IMR-90 (cell line): ENCODE measurements at regions of chr5 and their contacts with region 1.

Region 1: DNA sequence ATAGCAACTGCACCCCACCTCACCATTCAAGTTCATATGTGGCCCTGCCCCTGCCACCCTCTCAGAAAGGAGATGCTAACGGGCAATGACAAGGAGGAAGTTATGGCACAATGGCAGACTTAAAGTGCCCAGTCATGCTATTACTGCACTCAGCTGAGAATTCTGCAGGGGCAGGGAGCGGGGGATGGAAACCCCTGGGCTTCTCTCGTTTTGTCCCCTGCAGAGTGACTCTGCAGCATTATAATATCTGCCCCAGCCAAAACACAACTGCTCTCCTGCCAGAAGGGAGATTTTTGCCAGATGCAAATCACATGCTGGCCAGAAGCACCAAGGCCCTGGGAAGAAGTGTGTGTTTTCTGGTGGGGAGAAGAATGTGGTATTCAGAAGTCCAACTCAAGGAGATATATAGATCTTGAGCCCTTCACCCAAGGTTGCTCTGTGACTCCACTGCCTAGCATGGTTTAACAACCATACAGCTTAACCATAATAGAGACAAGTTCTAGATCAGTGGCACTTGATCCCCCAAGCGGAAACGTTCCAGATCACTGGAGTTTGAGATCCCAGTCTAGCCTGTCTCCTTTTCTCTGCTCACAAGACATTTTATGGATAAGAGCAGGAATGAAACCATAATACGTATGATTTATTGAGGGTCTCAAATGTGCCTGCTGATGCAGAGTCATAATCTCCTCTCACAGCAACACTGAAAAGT is 207.0 kb upstream of the MAP3K1 start:
- DNase-seq: peak; percentile 13
- ATAC-seq: no peak; the same call in 1 of the 2 replicates
- H3K4me3 ChIP-seq: no peak overlapping the region
- H3K27ac ChIP-seq: no peak overlapping the region
- H3K4me1 ChIP-seq: peaks cover 9% of the 10 kb centered on the region
- H3K27me3 ChIP-seq: peaks cover 4% of the 10 kb centered on the region; the same call in 1 of the 2 replicates
- CTCF ChIP-seq: no peak
- POLR2A ChIP-seq: no peak
- RAD21 ChIP-seq: no peak

Region 2: DNA sequence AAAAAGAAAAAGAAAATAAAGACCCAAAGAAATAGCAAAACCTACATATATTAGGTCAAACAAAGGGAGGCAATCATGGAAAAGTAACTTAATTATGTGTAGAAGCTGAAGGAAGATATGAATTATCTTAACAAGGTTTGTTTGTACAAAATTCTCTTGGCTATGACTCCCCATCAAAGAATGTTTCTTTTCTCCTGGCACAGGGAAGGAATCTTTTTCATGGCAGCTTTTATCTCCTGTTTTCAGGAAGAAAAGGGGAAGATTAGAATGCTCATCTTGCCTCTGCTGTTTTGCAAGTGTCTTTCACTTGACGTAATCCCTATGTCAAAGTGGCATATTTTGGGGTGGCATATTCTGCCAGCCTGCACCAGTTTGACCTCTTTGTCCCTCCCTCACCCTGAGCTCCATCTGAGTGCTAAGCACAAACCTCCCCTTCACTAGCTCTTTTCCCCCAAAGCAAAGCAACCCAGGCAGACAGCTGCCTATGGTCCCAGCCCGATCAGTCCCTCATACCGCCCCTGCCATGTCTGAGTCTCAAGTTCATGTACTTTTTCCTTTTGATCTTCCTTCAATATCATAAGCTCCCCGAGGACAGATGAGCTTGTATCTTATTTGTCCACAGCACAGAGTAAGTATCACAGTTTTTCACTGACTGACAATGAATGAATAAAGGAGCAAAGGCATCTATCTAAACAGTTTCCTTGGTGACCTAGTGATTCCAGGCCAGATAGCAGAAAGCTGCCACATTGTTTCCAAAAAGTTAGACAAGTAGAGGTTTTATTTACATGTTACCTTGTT is 132.5 kb before region 1 on chr5:
- CTCF ChIA-PET with region 1: no interaction called
- POLR2A ChIA-PET with region 1: no interaction called
- dilution Hi-C with region 1: no loop called
- in situ Hi-C with region 1: no loop called
- intact Hi-C with region 1: no loop called
- DNase-seq: peak; percentile 50
- ATAC-seq: peak; percentile 22
- H3K4me3 ChIP-seq: no peak overlapping the region
- H3K27ac ChIP-seq: peak overlapping the region; percentile 60
- H3K4me1 ChIP-seq: peaks cover 24% of the 10 kb centered on the region
- H3K27me3 ChIP-seq: no peaks in the 10 kb centered on the region
- CTCF ChIP-seq: no peak
- POLR2A ChIP-seq: no peak
- RAD21 ChIP-seq: no peak

Region 3: DNA sequence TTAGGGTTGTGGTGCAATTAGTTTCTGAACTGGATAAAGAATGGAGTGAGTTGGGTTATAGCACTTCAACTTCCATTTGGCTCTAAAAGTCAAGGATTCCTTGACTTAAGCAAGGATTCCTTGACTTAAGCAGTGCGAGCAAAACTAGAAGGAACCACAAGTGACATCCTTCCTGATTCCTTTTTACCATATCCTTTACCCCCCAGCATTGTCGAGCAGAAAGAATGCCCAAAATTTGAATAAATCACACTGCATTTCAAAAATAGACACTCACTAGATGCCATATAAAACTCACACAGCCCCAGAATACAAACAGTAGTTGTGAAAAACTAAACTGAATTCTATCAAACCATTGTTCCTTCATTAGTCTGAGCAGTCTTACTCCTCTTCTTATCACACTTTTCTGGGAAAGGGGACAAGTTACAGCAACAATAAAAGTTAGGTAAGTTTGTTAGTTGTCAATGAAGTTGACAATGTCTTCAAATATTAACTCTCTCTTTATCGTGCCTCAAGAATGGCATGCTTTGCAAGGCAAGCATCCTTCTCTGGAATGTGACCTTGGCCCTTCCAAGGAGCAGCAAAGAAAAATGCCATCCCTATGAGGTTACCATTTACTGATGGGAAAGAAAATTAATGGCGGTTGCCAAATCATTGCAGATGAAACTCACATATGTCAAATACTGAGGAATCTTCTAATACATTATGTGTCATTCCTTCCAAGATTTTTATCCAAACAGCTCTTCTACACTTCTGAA is 102.0 kb before region 1 on chr5:
- CTCF ChIA-PET with region 1: no interaction called
- POLR2A ChIA-PET with region 1: no interaction called
- dilution Hi-C with region 1: no loop called
- in situ Hi-C with region 1: no loop called
- intact Hi-C with region 1: loop called (anchors 5 kb)
- DNase-seq: peak; percentile 35
- ATAC-seq: peak; percentile 85
- H3K4me3 ChIP-seq: no peak overlapping the region
- H3K27ac ChIP-seq: no peak overlapping the region; the same call in 1 of the 2 replicates
- H3K4me1 ChIP-seq: 0 out of 2 replicates have a peak, but pooled peaks cover 1% of the 10 kb centered on the region
- H3K27me3 ChIP-seq: no peaks in the 10 kb centered on the region
- CTCF ChIP-seq: no peak
- POLR2A ChIP-seq: no peak
- RAD21 ChIP-seq: no peak

Region 4: DNA sequence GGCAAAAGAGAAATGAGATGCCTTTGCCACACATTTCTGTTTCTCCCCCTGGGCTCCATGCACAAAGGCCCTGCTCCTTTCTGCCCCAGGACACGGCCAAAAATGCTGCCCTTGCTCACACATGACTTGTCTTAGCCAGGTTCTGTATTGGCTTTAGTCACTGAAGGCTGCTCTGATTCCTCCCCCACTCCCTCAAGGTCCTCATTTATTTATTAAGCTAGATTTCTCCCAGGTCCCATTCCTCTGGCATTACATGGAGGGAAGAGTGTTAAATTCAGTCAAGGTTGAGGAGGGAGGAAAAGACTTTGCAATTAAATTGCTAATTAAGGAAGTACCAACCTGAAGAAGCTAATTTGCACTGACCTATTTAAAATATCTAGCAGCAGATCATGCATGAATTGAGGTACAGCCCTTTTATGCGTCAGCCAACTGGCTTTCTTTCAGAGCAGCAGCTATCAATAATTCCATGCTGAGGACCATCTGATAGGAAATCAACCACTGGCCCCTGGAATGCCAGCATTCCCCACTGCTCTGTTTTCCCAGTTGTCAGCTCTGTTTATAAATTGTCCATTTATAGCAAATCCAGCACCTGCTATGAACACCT is 125.8 kb after region 1 on chr5:
- CTCF ChIA-PET with region 1: no interaction called
- POLR2A ChIA-PET with region 1: no interaction called
- dilution Hi-C with region 1: no loop called
- in situ Hi-C with region 1: no loop called
- intact Hi-C with region 1: no loop called
- DNase-seq: no peak
- ATAC-seq: no peak
- H3K4me3 ChIP-seq: no peak overlapping the region
- H3K27ac ChIP-seq: no peak overlapping the region
- H3K4me1 ChIP-seq: peaks cover 3% of the 10 kb centered on the region
- H3K27me3 ChIP-seq: 0 out of 2 replicates have a peak, but pooled peaks cover under 1% of the 10 kb centered on the region
- CTCF ChIP-seq: no peak
- POLR2A ChIP-seq: no peak
- RAD21 ChIP-seq: no peak

Region 5: GRCh38 chr5:56962286-56962685 is 353.9 kb after region 1 on chr5:
- CTCF ChIA-PET with region 1: no interaction called
- POLR2A ChIA-PET with region 1: no interaction called
- dilution Hi-C with region 1: no loop called
- in situ Hi-C with region 1: no loop called
- intact Hi-C with region 1: no loop called
- DNase-seq: no peak
- ATAC-seq: no peak
- H3K4me3 ChIP-seq: no peak overlapping the region
- H3K27ac ChIP-seq: no peak overlapping the region
- H3K4me1 ChIP-seq: no peaks in the 10 kb centered on the region
- H3K27me3 ChIP-seq: peaks cover 47% of the 10 kb centered on the region
- CTCF ChIP-seq: no peak
- POLR2A ChIP-seq: no peak
- RAD21 ChIP-seq: no peak